GM10248 (cell line): ENCODE measurements at regions of chr14 and their contacts with region 1.

Region 1: GRCh38 chr14:21103710-21104447 is 3.0 kb downstream of the TMEM253 start:
- DNase-seq: peak; percentile 94
- CTCF ChIP-seq: peak; percentile 69

Region 2: GRCh38 chr14:20998664-20999366 is 105.1 kb before region 1 on chr14 and contains the start of gene SLC39A2:
- CTCF ChIA-PET with region 1: interaction called, 13 read pairs
- POLR2A ChIA-PET with region 1: interaction called, 4 read pairs
- DNase-seq: no peak
- CTCF ChIP-seq: no peak

Region 3: DNA sequence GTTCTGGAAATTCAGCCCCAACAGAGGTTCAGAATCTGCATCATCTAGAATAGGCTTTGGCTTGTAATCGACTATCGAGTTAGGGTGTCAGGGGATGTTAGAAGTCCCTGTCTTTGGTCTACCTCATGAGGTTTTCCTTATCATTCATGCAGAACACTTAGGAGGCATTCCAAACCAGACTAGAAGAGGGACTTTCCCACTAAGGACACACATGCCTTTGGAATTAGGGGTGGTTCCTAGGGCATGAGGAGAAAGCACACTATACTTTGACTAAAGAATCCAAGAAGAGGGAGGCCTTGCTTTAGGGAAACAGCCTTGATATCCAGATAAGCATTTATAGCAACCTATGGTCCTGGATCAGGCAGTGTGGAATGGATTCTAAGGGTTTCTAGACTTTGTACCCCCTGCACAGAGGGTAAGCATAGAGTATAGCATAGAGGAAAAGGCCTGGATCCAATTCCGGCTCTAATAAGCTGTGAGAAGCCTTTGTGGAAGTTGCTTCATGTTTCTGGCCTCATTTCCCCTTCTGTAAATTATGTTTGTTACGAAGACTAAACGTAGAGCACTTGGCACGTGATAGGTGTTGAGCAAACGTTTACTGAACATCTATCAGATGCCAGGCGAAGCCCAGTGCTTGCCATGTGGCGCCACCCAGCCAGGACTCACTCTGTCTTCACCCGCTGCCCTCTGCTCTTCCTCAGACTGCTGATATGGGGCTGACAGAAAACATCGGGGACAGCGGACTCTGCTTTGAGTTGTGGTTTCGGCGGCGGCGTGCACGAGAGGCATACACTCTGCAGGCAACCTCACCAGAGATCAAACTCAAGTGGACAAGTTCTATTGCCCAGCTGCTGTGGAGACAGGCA is 18.7 kb before region 1 on chr14:
- CTCF ChIA-PET with region 1: interaction called, 62 read pairs
- POLR2A ChIA-PET with region 1: interaction called, 3 read pairs
- DNase-seq: no peak
- CTCF ChIP-seq: no peak

Region 4: DNA sequence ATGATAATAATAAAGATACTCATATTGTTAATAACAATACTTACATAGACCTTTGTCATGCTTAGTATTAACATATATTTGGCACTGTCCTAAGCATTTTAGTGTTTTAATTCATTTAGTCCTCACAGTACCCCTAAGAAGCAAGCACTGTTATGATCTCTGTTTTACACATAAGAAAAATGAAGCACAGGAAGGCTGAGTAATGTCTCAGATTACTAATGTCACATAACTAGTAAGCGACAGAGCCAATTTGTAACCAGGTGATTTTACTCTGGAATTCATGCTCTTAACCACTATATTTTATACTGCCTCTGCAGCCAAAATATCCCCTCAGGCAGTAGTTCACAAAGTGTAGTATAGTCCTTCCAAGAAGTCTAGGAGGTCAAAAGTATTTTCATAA is 17.2 kb after region 1 on chr14:
- CTCF ChIA-PET with region 1: interaction called, 13 read pairs
- POLR2A ChIA-PET with region 1: no interaction called
- DNase-seq: no peak
- CTCF ChIP-seq: no peak

Region 5: GRCh38 chr14:21136024-21136423 is 32.1 kb after region 1 on chr14:
- CTCF ChIA-PET with region 1: interaction called, 12 read pairs
- POLR2A ChIA-PET with region 1: no interaction called
- DNase-seq: peak; percentile 57
- CTCF ChIP-seq: peak; percentile 30

Region 6: GRCh38 chr14:22002860-22003309 is 899.0 kb after region 1 on chr14:
- CTCF ChIA-PET with region 1: no interaction called
- POLR2A ChIA-PET with region 1: no interaction called
- DNase-seq: no peak
- CTCF ChIP-seq: no peak